ENCODE measurements at regions of chr11 and their contacts with region 1.

Region 1: GRCh38 chr11:100575870-100576705 is 111.0 kb upstream of the ARHGAP42 start:
- DNase-seq: peak; percentile 25
- H3K4me3 ChIP-seq: no peak overlapping the region
- H3K27ac ChIP-seq: no peak overlapping the region
- H3K4me1 ChIP-seq: no peaks in the 10 kb centered on the region
- H3K27me3 ChIP-seq: no peaks in the 10 kb centered on the region
- CTCF ChIP-seq: peak in 3 of 4 experiments; percentile 70 to 86 (median 85)
- POLR2A ChIP-seq: no peak

Region 2: DNA sequence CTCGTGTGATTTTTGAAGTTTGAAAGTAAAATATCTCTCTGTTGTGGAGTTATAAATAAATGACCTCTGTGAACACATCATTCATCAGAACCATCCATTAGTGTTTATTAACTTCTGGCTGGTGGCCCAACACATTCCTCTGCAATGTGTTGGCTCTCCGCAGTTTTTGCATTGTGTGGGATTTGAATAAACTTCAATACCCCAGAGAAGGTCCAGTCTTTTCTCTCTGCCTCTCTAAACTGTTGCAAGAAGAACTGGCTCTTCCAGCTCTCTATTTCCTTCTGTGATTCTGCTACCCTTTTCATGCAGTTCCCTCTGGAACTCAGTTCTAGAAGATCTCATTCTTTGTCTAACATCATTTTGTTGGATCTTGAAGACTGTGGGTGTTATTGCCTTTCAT is 14.0 kb before region 1 on chr11:
- intact Hi-C with region 1: no loop called
- DNase-seq: no peak
- H3K4me3 ChIP-seq: no peak overlapping the region
- H3K27ac ChIP-seq: no peak overlapping the region
- H3K4me1 ChIP-seq: no peaks in the 10 kb centered on the region
- H3K27me3 ChIP-seq: no peaks in the 10 kb centered on the region
- CTCF ChIP-seq: no peak
- POLR2A ChIP-seq: no peak

Region 3: DNA sequence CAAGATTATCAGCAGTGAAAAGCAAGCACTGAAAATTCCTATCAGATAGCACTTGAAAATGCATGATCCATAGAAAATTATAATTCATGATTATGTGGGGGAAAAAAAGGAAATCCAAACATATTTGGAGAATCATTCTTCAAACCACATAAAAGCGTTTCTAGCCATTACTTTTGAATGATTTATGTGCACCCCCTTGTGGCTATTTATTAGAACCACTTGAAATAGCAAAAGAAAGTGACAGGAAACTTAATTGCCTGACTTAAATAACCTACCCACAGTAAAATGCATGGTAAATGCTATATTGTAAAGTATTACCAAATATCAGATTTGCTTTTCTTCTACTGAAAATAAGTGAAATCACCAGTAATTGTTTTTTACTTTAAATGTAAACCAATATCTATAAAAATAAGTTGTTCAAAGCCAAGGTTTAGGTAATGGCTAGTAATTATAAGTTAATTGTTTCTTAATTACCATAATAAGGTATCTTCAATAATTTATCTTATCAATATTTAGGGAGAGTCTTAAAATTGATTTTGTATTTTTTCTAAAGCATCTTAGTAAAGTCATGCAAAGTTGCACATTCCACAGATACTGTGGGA is 279.5 kb after region 1 on chr11:
- intact Hi-C with region 1: loop called (anchors 5 kb)
- DNase-seq: no peak
- H3K4me3 ChIP-seq: no peak overlapping the region
- H3K27ac ChIP-seq: no peak overlapping the region
- H3K4me1 ChIP-seq: no peaks in the 10 kb centered on the region
- H3K27me3 ChIP-seq: no peaks in the 10 kb centered on the region
- CTCF ChIP-seq: peak; percentile 37 to 80 (median 74)
- POLR2A ChIP-seq: no peak

Region 4: GRCh38 chr11:100929377-100929776 is 353.3 kb after region 1 on chr11:
- intact Hi-C with region 1: loop called (anchors 2 kb)
- DNase-seq: no peak
- H3K4me3 ChIP-seq: no peak overlapping the region
- H3K27ac ChIP-seq: no peak overlapping the region
- H3K4me1 ChIP-seq: no peaks in the 10 kb centered on the region
- H3K27me3 ChIP-seq: no peaks in the 10 kb centered on the region
- CTCF ChIP-seq: no peak
- POLR2A ChIP-seq: no peak

Measured in prostate gland (tissue), 2 donors.